ENCODE measurements at regions of chr1 and their contacts with region 1.

Region 1: DNA sequence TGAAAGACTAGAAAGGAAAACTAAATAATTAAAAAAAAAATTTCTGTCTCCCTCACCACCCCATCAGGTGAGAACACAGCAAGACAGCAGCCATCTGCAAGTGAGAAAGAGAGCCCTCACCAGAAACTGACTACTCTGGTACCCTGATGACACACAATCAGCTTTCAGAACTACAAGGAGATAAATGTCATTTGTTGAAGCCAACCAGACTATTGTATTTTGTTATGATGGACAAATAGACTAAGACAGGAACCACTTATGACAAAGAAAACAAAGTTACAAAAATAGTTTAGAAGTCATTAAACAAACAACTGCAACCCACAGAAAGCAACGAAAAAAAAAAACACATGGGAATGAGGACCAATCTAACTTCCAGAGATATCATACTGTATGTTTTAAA is 98.3 kb downstream of the FAF1 start:
- DNase-seq: no peak
- H3K4me3 ChIP-seq: no peak overlapping the region
- H3K27ac ChIP-seq: no peak overlapping the region
- H3K4me1 ChIP-seq: no peaks in the 10 kb centered on the region
- H3K27me3 ChIP-seq: no peaks in the 10 kb centered on the region
- CTCF ChIP-seq: no peak
- EP300 ChIP-seq: no peak
- POLR2A ChIP-seq: no peak

Region 2: DNA sequence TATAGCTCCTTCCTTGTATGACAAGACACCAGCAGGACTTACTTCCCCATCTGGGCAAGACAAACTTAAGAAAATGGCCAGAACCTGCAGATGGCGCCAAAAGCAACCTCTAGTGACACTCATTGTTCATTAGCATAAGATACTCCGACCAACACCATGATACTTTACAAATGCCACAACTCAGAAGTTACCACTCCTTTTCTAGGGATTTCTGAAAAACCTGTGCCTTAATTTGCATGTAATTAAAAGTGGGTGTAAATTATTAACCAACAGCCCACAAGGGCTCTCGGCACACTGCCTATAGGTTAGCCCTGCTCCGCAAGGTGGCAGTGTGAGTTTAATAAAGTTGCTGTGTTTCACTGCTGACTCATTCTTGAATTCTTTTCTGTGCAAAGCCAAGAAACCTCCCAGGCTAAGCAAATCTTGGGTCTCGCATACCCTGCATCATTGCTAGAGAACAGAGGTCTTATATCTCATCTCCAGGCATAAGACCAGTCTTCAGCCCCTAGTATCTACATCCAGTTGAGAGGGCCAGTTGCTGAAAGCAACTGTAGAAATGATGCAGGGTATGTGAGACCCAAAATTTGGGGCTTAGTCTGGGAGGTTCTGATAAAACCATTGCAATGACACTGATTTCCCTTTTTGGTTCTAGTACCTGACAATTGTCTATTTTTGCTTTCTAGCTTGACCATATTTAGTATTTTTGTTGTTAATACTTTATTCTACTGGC is 11.9 kb after region 1 on chr1:
- intact Hi-C with region 1: loop called (anchors 1 kb)
- DNase-seq: no peak
- H3K4me3 ChIP-seq: no peak overlapping the region
- H3K27ac ChIP-seq: no peak overlapping the region
- H3K4me1 ChIP-seq: peaks cover 0 to 6% (median 0%) of the 10 kb centered on the region in 4 donors
- H3K27me3 ChIP-seq: no peaks in the 10 kb centered on the region
- CTCF ChIP-seq: peak in 2 of 3 experiments; percentile 33 to 44
- EP300 ChIP-seq: no peak
- POLR2A ChIP-seq: no peak

Region 3: DNA sequence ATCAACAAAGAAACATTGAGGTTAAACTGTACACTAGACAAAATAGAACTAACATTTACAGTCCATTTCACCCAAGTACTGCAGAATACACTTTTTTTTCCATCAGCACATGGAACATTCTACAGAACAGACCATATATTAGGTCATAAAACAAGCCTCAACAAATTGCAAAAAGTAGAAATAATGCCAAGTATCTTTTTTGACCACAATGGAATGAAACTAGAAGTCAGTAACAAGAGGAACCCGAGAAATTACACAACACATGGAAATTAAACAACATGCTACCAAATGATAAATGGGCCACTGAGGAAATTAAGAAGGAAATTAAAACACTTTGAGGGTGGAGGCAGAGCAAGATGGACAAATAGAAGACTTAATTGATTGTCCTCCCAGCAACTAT is 231.8 kb after region 1 on chr1:
- intact Hi-C with region 1: no loop called
- DNase-seq: no peak
- H3K4me3 ChIP-seq: no peak overlapping the region
- H3K27ac ChIP-seq: no peak overlapping the region
- H3K4me1 ChIP-seq: no peaks in the 10 kb centered on the region
- H3K27me3 ChIP-seq: peaks cover 0 to 18% (median 1%) of the 10 kb centered on the region in 4 donors
- CTCF ChIP-seq: no peak
- EP300 ChIP-seq: no peak
- POLR2A ChIP-seq: no peak